ENCODE measurements at regions of chr2 and their contacts with region 1.

Region 1: GRCh38 chr2:204947454-204947853 is 402.2 kb downstream of the PARD3B start:
- DNase-seq: no peak
- H3K4me3 ChIP-seq: no peak overlapping the region
- H3K27ac ChIP-seq: no peak overlapping the region
- H3K4me1 ChIP-seq: no peaks in the 10 kb centered on the region
- H3K27me3 ChIP-seq: no peaks in the 10 kb centered on the region
- CTCF ChIP-seq: no peak

Region 2: GRCh38 chr2:204982303-204982702 is 34.8 kb after region 1 on chr2:
- CTCF ChIA-PET with region 1: no interaction called
- POLR2A ChIA-PET with region 1: no interaction called
- intact Hi-C with region 1: loop called (anchors 1 kb)
- DNase-seq: peak; percentile 9
- H3K4me3 ChIP-seq: no peak overlapping the region
- H3K27ac ChIP-seq: no peak overlapping the region
- H3K4me1 ChIP-seq: peaks cover 6% of the 10 kb centered on the region
- H3K27me3 ChIP-seq: no peaks in the 10 kb centered on the region
- CTCF ChIP-seq: no peak

Region 3: DNA sequence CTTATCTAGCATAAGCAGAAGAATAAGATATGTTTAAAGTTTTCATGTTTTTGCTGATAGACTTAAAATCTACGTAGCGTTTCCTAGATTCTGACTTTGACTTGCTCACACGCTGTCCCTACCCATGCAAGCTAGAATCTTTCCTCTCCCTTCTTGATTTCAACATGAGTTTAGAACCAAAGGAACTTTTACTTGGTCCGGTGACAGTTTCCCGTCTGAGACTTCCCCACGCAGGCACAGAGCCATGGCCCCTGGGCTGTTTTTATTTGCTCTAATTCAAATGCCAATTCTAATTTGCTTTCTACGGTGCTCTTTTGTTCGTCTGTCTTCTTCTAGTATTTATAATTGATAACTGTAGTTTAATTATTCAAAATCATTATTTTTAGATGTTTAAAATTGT is 65.5 kb after region 1 on chr2:
- CTCF ChIA-PET with region 1: no interaction called
- POLR2A ChIA-PET with region 1: no interaction called
- intact Hi-C with region 1: no loop called
- DNase-seq: no peak
- H3K4me3 ChIP-seq: no peak overlapping the region
- H3K27ac ChIP-seq: no peak overlapping the region
- H3K4me1 ChIP-seq: no peaks in the 10 kb centered on the region
- H3K27me3 ChIP-seq: no peaks in the 10 kb centered on the region
- CTCF ChIP-seq: no peak